ENCODE measurements at regions of chr5 and their contacts with region 1.

Region 1: DNA sequence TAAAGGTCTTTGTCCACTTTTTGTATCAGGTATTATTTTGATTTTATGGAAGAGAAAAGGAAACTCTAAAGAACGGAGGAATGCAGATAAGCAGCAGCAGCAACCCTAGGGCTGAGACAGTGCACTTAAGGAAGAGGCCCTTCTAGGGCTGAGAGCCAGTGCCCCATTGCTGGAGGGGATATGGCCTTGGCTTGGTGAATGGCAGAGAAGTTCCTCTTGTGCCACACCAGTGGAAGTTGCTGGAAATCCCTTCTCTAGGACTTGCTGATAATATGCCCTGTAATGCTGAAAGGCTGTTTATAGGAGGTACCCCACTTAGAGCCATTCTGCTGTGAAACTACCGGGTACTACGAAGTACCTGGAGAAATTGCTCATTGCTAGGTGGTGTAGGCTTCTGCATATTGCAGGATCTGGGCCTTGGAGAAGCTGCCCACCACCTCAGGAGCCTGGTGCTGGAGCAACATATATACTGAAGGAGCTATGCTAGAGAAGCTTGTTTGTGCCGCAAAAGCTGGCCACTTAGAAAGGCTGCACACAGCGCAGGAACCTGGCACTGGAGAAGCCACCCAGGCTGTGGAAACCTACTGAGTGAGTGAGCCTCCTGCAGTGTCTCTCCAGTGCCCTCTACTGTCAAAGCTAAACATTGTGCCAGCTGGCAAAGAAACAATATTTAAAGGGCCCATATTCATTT is 9.6 kb upstream of the UBTD2 start:
- DNase-seq: peak; percentile 63
- H3K4me3 ChIP-seq: no peak overlapping the region
- H3K27ac ChIP-seq: no peak overlapping the region
- H3K4me1 ChIP-seq: no peaks in the 10 kb centered on the region
- H3K27me3 ChIP-seq: peaks cover 2 to 7% of the 10 kb centered on the region in 2 experiments
- CTCF ChIP-seq: peak; percentile 81 to 87
- POLR2A ChIP-seq: no peak

Region 2: DNA sequence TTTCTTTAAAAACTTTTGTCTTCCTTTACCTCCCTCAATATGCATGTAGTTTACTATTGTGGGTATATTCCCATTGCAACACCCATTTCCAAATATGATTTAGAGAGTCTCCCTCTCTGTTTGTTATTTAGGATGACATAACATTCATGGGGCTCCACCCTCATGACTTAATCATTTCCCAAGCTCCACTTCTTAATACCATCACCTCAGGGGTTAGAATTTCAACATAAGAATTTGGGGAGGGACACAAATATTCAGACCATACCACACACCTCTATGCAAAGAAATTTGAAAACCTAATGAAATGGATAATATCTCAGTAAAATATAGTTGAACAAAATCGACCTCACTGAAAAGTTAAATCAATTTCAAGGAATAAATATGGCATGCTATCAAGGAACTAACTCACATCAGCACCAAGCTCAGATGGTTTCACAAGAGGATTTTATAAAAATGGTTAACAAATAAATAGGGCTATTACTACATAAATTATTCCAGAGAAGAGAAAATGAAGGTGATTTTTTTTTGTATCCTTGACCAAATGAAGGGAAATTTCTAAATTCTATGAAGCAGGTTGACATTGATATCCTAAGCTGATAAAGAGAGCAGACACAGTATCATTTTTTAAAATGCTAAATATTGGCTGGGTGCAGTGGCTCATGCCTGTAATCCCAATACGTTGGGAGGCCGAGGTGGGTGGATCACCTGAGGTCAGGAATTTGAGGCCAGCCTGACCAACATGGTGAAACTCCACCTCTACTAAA is 10.6 kb after region 1 on chr5:
- CTCF ChIA-PET with region 1: interaction called, 10 read pairs
- POLR2A ChIA-PET with region 1: no interaction called
- dilution Hi-C with region 1: no loop called
- intact Hi-C with region 1: no loop called
- DNase-seq: no peak
- H3K4me3 ChIP-seq: no peak overlapping the region
- H3K27ac ChIP-seq: no peak overlapping the region
- H3K4me1 ChIP-seq: no peaks in the 10 kb centered on the region
- H3K27me3 ChIP-seq: peaks cover 2 to 3% of the 10 kb centered on the region in 2 experiments
- CTCF ChIP-seq: no peak
- POLR2A ChIP-seq: no peak

Region 3: DNA sequence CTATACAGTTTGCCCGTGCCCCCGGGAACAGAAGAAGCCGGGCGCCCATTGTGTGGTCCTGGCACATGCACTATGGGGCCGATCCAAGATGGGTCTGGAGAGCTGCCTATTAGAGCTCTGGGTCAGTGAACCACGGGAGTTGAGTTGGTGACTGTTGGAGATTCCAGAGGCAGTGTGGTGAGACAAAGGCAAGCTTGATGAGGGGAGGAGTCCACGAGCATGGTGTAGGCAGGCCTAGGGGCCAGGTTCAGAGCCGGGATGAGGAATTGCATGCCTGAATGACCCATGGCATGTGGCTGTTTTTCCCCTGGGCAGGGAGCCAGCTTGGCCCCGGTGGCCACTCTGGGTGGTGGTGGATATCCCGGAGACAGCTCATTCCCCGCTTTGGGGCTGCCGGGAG is 1119.4 kb after region 1 on chr5:
- CTCF ChIA-PET with region 1: no interaction called
- POLR2A ChIA-PET with region 1: no interaction called
- dilution Hi-C with region 1: no loop called
- intact Hi-C with region 1: no loop called
- DNase-seq: no peak
- H3K4me3 ChIP-seq: no peak overlapping the region
- H3K27ac ChIP-seq: no peak overlapping the region
- H3K4me1 ChIP-seq: no peaks in the 10 kb centered on the region
- H3K27me3 ChIP-seq: no peaks in the 10 kb centered on the region
- CTCF ChIP-seq: no peak
- POLR2A ChIP-seq: no peak